Dendritic cell treated with granulocyte-macrophage colony-stimulating factor and Interleukin-4, amounts not matched to agents 40 ng/mL and 50 ng/mL, for 4 days (primary cell): ENCODE measurements at regions of chr17 and their contacts with region 1.

Region 1: DNA sequence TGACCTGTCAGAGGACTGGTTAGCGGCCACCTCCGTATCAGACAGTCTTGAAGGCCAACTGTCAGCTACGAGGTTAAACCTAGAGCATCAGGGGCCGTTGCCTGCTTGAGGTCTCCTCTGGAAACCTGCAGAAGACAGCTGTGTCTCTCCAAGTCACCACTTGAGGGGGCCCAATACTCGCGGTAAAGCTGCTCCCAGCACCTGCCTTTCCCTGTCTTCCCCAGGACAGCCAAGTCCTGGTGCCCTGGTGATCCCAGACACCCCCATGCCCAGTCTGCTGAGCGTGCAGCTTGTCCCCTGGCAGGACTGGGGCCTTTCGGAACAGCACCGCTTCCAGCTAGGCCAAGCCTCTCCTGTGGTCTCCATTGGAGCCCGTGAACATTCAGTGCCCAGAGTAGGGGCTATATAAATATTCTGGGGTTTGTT is 80.1 kb downstream of the DNAH17 start:
- H3K4me3 Mint-ChIP-seq: no peak overlapping the region
- H3K27ac Mint-ChIP-seq: no peak overlapping the region
- H3K4me1 Mint-ChIP-seq: peaks cover 20% of the 10 kb centered on the region
- H3K27me3 Mint-ChIP-seq: peaks cover 19% of the 10 kb centered on the region

Region 2: GRCh38 chr17:78421484-78422266 is 75.5 kb before region 1 on chr17:
- intact Hi-C with region 1: no loop called
- H3K4me3 Mint-ChIP-seq: no peak overlapping the region
- H3K27ac Mint-ChIP-seq: peak overlapping the region; percentile 52
- H3K4me1 Mint-ChIP-seq: peaks cover 50% of the 10 kb centered on the region
- H3K27me3 Mint-ChIP-seq: no peaks in the 10 kb centered on the region

Region 3: DNA sequence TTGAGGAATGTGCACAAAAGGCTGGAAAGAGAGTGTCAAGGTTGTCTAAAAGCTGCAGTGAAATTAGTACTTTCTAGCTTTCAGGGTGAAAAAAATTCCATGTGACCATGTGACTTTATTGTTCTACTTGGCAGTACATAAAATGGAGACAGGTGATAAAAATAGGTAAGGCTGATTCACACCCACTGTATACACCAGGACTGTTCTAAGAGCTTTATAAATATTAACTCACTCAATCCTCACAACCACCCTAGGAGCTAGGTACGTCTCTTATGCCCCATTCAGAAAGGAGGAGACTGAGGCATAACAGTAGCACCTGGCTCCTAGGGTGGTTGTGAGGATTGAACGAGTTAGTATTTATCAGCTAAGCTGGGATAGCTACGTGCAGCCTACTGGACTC is 108.3 kb after region 1 on chr17:
- intact Hi-C with region 1: loop called (anchors 1 kb)
- H3K4me3 Mint-ChIP-seq: no peak overlapping the region
- H3K27ac Mint-ChIP-seq: no peak overlapping the region
- H3K4me1 Mint-ChIP-seq: peaks cover 9% of the 10 kb centered on the region
- H3K27me3 Mint-ChIP-seq: peaks cover 11% of the 10 kb centered on the region

Region 4: DNA sequence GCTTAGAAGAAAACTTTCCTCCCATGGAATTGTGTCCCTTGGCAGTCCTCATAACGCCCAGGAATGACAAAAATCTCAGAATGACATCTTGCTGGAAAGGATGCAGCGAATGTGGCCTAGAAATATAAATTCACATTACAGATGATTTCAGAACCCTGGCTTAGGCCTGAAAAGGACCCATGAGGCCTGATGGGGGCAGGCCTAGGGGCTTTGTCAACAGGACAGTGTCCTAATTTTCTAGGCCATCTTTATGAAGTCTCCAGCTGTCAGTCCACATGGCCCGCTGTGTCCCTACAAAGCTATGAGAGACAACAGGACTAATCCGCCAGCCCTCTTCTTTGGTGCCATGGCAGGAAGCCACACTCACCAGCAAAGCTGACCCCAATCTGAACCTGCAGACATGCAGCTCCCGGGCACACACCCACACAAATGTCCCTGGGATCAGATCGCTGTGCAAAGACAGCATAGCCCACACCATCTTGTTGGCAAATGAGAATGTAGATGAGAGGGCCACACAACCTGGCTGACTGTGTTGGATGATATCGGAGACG is 120.5 kb after region 1 on chr17:
- intact Hi-C with region 1: no loop called
- H3K4me3 Mint-ChIP-seq: no peak overlapping the region
- H3K27ac Mint-ChIP-seq: no peak overlapping the region
- H3K4me1 Mint-ChIP-seq: peaks cover 24% of the 10 kb centered on the region
- H3K27me3 Mint-ChIP-seq: peaks cover 16% of the 10 kb centered on the region

Region 5: DNA sequence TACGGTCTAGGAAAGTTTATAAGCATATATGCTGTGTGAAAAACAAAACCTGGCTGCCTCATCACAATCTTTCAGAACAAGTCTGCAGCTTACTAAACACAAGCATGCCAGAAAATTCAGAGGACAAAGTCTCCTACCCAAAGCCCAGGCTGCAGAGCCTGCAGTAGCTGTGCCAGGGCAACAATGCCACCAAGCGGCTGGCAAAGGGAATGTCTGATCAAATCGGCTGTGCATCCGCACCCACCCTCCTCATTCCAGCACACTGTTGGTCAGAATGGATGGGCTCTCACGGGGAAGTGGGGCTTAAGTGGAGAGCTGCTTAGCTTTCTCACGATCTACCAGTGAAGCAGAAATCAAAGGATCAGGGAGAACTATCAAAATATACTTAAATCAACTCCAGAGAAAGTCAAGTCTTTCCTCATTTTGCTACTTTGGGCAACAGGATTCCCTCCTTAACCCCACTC is 211.4 kb after region 1 on chr17:
- intact Hi-C with region 1: loop called (anchors 1 kb)
- H3K4me3 Mint-ChIP-seq: no peak overlapping the region
- H3K27ac Mint-ChIP-seq: no peak overlapping the region
- H3K4me1 Mint-ChIP-seq: peaks cover 32% of the 10 kb centered on the region
- H3K27me3 Mint-ChIP-seq: no peaks in the 10 kb centered on the region

Region 6: GRCh38 chr17:78798695-78799559 is 301.8 kb after region 1 on chr17:
- intact Hi-C with region 1: loop called (anchors 1 kb)
- H3K4me3 Mint-ChIP-seq: no peak overlapping the region
- H3K27ac Mint-ChIP-seq: peak overlapping the region; percentile 9
- H3K4me1 Mint-ChIP-seq: peaks cover 25% of the 10 kb centered on the region
- H3K27me3 Mint-ChIP-seq: no peaks in the 10 kb centered on the region